Activated naive CD4-positive, alpha-beta T cell treated with anti-CD3 and anti-CD28 coated beads for 36 hours (primary cell): ENCODE measurements at regions of chr12 and their contacts with region 1.

Region 1: GRCh38 chr12:14716848-14717444 is 20.5 kb upstream of the GUCY2C start:
- DNase-seq: peak; percentile 68
- H3K4me3 Mint-ChIP-seq: no peak overlapping the region
- H3K27ac Mint-ChIP-seq: no peak overlapping the region
- H3K4me1 Mint-ChIP-seq: no peaks in the 10 kb centered on the region
- H3K27me3 Mint-ChIP-seq: no peaks in the 10 kb centered on the region

Region 2: DNA sequence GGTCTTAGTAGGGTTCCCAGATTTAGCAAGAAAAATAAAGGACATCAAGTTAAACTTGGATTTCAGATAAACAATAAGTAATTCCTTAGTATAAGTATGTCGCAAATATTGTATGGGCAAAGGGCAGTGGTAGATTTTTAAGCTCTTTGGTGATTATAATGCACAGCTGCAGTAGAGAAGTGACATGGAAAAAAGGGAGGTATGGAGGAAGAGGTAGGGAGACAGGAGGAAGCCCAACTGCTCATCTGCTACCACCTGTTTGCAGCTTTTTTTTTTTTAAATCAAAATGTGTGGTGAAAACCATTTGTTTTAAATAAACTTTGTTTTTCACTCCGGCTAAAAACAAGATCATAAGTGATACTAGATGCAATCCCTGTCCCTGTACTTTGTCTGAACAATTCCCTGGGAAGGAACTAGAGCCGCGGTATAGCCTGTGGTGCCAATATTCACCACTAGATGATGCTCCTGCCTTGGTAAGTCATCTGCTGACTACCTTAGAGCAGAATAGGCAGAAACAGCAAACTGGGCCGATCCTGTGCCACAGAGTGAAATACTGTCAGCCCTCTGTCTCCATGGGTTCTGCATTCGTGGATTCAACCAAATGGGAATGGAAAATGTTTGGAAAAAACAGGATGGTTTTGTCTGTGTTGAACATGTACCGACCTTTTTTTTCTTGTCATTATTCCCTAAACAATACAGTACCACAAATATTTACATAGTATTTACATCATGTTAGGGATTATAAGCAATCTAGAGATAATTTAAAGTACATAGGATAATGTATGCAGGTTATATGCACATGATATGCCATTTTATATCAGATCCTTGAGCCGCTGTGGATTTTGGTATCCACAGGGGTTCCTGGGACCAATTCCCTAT is 86.9 kb before region 1 on chr12:
- CTCF ChIA-PET with region 1: interaction called, 5 read pairs
- intact Hi-C with region 1: loop called (anchors 1 kb)
- DNase-seq: peak; percentile 79
- H3K4me3 Mint-ChIP-seq: no peak overlapping the region
- H3K27ac Mint-ChIP-seq: no peak overlapping the region
- H3K4me1 Mint-ChIP-seq: no peaks in the 10 kb centered on the region
- H3K27me3 Mint-ChIP-seq: no peaks in the 10 kb centered on the region

Region 3: DNA sequence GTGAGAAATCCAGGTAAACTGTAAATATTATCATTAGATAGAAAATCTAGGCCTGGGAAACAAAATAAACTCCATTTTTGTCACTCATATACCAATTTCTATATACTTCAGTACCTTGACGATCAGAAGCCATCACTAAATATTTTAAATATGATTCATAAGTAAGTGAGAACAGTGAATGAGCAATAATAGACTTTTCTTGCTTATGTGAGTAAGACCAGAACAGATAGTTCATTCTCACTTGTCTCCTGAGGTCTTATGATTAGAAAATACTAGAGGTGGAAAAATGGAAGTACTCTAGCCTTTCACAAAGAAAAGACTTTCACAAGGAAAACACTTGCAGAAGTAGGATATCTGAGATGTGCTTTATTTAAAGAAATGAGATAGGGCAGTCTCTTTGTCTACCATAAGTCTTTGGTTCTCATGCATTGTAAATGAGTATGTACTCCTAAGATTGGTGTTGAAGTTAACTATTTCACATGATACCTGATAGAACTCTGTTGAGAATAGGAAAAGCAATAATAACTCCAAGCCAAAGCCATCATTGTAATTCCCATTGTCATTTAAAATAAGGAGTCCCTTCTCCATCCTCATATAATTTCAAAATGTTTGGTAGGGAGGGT is 107.2 kb after region 1 on chr12:
- CTCF ChIA-PET with region 1: no interaction called
- intact Hi-C with region 1: no loop called
- DNase-seq: no peak
- H3K4me3 Mint-ChIP-seq: no peak overlapping the region
- H3K27ac Mint-ChIP-seq: no peak overlapping the region
- H3K4me1 Mint-ChIP-seq: peaks cover 22% of the 10 kb centered on the region
- H3K27me3 Mint-ChIP-seq: peaks cover 1% of the 10 kb centered on the region